ENCODE measurements at regions of chr19 and their contacts with region 1.

Region 1: DNA sequence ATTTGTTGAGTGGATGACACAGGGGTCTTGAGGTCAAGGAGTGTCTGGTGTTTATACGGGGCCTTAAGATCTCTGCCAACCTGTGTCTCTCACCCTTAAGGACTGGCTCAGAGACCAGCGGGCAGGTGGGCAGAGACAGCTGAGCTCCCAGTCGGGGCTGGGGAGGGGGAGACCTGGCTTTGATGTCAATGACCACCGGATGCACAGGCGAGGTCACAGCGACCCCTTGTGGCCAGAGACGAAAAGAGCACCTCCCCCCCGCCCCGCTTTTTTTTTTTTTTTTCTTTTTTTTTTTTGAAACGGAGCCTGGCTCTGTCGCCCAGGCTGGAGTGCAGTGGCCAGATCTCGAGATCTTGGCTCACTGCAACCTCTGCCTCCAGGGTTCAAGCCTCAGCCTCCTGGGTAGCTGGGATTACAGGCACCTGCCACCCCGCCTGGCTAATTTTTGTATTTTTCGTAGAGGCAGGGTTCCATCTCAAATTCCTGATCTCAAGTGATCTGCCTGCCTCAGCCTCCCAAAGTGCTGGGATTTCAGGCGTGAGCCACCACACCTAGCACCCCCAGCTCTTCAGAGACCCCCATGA is 12.1 kb upstream of the KLK14 start:
- DNase-seq: peak in 3 of 6 donors; percentile 45 to 73 (median 66)
- ATAC-seq: peak; percentile 11 to 57 (median 42)
- H3K4me3 ChIP-seq: no peak overlapping the region
- H3K27ac ChIP-seq: no peak overlapping the region
- H3K4me1 ChIP-seq: no peaks in the 10 kb centered on the region
- H3K27me3 ChIP-seq: no peaks in the 10 kb centered on the region
- CTCF ChIP-seq: peak; percentile 52 to 67 (median 63)

Region 2: GRCh38 chr19:50933640-50934039 is 161.1 kb before region 1 on chr19:
- intact Hi-C with region 1: loop called in 1 of 3 experiments (anchors 5 kb)
- DNase-seq: no peak
- ATAC-seq: no peak
- H3K4me3 ChIP-seq: no peak overlapping the region
- H3K27ac ChIP-seq: no peak overlapping the region
- H3K4me1 ChIP-seq: no peaks in the 10 kb centered on the region
- H3K27me3 ChIP-seq: peaks cover 0 to 13% (median 0%) of the 10 kb centered on the region in 4 donors
- CTCF ChIP-seq: no peak

Region 3: DNA sequence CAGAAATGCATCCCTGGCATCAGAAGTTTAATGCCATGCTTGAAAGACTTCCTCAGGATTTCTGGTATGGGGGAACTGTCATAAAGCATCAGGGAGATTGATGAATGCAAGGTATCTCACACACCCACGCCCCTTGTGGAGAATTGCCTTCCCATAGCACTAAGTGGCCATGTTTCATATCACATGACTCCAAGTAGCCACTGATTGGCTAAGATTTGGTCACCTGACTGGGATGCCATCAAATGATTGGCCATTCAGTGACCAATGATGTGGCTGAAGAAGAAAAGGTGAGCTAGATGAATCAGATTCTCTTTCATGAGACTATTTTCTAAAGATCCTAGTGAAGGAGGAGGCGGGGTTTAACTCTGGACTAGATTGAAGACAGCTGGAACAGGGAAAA is 100.7 kb before region 1 on chr19:
- intact Hi-C with region 1: no loop called
- DNase-seq: no peak
- ATAC-seq: no peak
- H3K4me3 ChIP-seq: no peak overlapping the region
- H3K27ac ChIP-seq: no peak overlapping the region
- H3K4me1 ChIP-seq: no peaks in the 10 kb centered on the region
- H3K27me3 ChIP-seq: no peaks in the 10 kb centered on the region
- CTCF ChIP-seq: no peak

Region 4: DNA sequence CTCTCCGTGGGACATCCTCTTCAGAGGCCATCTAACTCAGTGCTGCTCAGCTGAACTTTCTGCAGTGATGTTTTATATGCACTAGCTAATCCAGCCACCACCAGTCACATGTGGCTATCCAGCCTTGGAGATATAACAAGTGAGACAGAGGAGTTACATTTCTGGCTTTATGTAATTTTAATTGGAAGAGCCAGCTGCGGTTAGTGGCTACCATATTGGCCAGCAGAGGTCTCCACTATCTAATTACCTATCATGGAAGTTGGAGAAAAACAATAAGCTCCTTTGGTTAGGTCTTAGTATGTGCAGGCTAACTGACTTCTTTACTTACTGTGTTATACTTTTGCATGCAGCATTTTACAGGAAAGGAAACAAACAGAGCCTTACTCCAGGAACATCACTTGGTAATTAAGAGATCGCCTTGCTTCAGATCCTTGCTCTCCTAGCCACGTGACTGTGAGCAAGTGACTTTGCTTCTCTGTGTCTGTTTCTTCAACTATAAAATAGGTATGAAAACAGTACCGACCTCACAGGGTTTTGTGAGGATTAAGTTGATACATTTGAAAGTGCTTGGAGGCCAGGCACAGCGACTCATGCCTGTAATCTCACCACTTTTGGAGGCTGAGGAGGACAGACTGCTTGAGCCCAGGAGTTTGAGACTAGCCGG is 73.7 kb before region 1 on chr19:
- intact Hi-C with region 1: loop called in 2 of 3 experiments (anchors 5 kb)
- DNase-seq: peak in 2 of 6 donors; percentile 6 to 47
- ATAC-seq: peak; percentile 51 to 61 (median 56)
- H3K4me3 ChIP-seq: no peak overlapping the region
- H3K27ac ChIP-seq: no peak overlapping the region
- H3K4me1 ChIP-seq: peaks cover 0 to 12% (median 0%) of the 10 kb centered on the region in 3 donors
- H3K27me3 ChIP-seq: no peaks in the 10 kb centered on the region
- CTCF ChIP-seq: peak; percentile 30 to 57 (median 40)

Region 5: GRCh38 chr19:51026554-51026831 is 68.3 kb before region 1 on chr19 and contains the start of gene KLK11:
- intact Hi-C with region 1: loop called in 2 of 3 experiments (anchors 5 kb)
- DNase-seq: peak; percentile 22 to 86 (median 68)
- ATAC-seq: peak; percentile 74 to 85 (median 84)
- H3K4me3 ChIP-seq: peak within 1 kb of the TSS in 3 of 4 donors; percentile 27 to 49 (median 34)
- H3K27ac ChIP-seq: peak within 1 kb of the TSS; percentile 37 to 68 (median 59)
- H3K4me1 ChIP-seq: peaks cover 0 to 9% (median 0%) of the 10 kb centered on the region in 3 donors
- H3K27me3 ChIP-seq: no peaks in the 10 kb centered on the region
- CTCF ChIP-seq: no peak
- total RNA-seq, gene KLK11: 6.7 to 24.2 (median 11.4) TPM

Region 6: GRCh38 chr19:51207744-51208143 is 113.0 kb after region 1 on chr19:
- intact Hi-C with region 1: no loop called
- DNase-seq: no peak
- ATAC-seq: peak in 2 of 4 donors; percentile 52 to 59
- H3K4me3 ChIP-seq: no peak overlapping the region
- H3K27ac ChIP-seq: no peak overlapping the region
- H3K4me1 ChIP-seq: no peaks in the 10 kb centered on the region
- H3K27me3 ChIP-seq: no peaks in the 10 kb centered on the region
- CTCF ChIP-seq: no peak

Region 7: GRCh38 chr19:51226067-51226466 is 131.3 kb after region 1 on chr19:
- intact Hi-C with region 1: no loop called
- DNase-seq: no peak
- ATAC-seq: no peak
- H3K4me3 ChIP-seq: peak overlapping the region in 1 of 4 donors; percentile 20
- H3K27ac ChIP-seq: no peak overlapping the region
- H3K4me1 ChIP-seq: no peaks in the 10 kb centered on the region
- H3K27me3 ChIP-seq: peaks cover 0 to 3% (median 0%) of the 10 kb centered on the region in 4 donors
- CTCF ChIP-seq: no peak

Measured in pancreas (tissue), 10 donors.